ENCODE measurements at regions of chr11 and their contacts with region 1.

Region 1: DNA sequence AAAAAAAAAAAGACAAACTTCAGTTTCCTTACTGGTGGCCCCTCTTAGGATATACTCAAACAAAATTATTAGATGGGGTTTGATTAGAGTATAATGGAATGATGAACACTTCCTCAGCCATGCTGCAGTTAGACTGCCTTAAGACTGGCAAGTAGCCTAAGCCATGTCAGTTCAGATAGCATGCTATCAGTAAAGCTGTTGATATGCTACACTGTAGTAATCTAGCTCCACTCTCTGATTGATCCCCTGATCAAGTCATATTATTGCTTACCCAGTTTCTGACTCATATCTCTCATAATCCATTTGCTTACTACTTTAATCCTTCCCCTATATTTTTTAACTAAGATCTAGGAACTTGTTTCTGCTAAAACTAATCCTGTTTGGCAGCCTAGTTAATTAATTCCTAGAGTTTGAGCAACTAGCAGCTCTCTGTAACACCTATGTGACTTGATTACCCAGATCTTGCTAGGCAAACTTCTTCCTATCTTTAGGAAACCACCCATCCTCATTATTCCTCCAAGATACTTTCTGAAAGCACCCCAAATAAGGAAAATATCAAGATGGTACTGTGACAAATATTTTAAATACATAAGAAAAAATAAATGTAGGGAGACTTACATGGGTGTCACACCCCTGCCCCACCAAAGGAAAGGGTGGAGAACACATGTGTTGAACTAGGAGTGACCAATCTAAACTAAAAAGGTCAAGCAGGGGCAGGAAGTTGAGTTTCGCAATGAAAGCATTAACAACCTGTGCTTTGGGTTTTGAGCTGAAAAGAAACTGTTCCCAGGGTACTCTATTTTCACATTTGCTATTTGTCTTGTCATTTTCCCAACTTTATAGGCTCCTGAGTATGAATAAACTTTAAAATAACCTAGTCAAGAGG is 43.2 kb downstream of the PIK3C2A start:
- DNase-seq: no peak
- ATAC-seq: peak in 1 of 2 donors; percentile 66

Region 2: GRCh38 chr11:17207317-17208258 is 43.0 kb after region 1 on chr11 and contains the start of gene PIK3C2A:
- intact Hi-C with region 1: loop called in 1 of 2 experiments (anchors 5 kb)
- DNase-seq: peak; percentile 97
- ATAC-seq: peak; percentile 98
- total RNA-seq, gene PIK3C2A: 41.1 to 62.5 TPM

Measured in left cardiac atrium (tissue), 4 donors.